GM23248 (cell line): ENCODE measurements at regions of chr7 and their contacts with region 1.

Region 1: DNA sequence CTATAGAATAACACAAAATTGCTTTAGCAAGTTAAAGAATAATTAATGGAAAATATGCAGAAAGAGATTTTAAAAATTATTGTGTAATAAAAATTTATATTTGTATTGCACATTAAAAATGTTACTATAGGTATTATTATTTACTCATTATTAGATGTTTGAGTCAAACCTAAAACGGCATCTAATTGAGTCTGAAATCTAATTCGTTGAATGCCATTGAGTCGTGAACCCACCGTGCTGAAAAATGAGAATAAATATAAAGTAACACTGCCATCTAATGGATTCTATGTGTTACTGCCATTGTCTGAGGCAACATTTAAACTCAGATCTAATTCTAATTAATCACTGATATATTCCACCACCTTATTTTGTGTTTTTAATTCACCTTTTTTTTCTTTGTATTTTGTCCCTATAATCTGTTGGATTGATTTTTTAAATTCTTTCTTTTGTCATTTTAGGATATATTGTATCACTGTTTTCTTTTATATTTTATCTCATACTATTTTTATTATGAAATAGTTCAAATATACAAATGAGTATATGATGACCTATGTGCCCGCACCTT is 62.2 kb downstream of the SAMD9 start:
- DNase-seq: peak; percentile 70
- H3K4me3 ChIP-seq: no peak overlapping the region
- H3K27ac ChIP-seq: no peak overlapping the region
- H3K4me1 ChIP-seq: no peaks in the 10 kb centered on the region
- H3K27me3 ChIP-seq: no peaks in the 10 kb centered on the region

Region 2: DNA sequence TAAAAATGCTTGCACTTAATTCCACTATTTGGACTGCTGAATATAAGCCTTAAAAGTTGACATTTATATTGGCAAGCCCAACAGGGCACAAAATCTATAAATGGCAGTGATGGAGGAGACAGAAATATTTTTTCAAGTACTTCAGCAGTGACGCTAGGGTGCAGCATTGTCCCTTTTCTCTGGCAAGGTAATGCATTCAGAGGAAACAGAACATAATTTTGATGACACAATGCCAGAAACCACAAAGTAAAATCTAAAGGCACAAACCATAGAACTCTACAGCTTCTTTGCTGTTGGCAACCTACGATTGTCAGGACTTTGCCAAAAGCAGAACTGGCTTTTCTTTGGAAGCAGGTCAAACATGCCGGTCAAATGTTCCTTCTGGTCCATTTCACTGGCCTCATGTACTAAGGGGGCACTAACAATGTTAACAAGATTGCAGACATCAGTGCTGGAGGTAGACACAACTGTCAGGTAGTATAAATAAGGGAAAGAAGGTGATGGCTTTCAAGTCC is 434.5 kb before region 1 on chr7:
- in situ Hi-C with region 1: loop called (anchors 5 kb)
- DNase-seq: peak; percentile 89
- H3K4me3 ChIP-seq: no peak overlapping the region
- H3K27ac ChIP-seq: peak overlapping the region; percentile 7; the same call in 1 of the 2 replicates
- H3K4me1 ChIP-seq: peaks cover 25% of the 10 kb centered on the region
- H3K27me3 ChIP-seq: no peaks in the 10 kb centered on the region

Region 3: GRCh38 chr7:92645114-92646061 is 410.2 kb before region 1 on chr7:
- in situ Hi-C with region 1: no loop called
- DNase-seq: no peak
- H3K4me3 ChIP-seq: no peak overlapping the region
- H3K27ac ChIP-seq: peak overlapping the region; percentile 38; the same call in 1 of the 2 replicates
- H3K4me1 ChIP-seq: peaks cover 32% of the 10 kb centered on the region
- H3K27me3 ChIP-seq: no peaks in the 10 kb centered on the region

Region 4: GRCh38 chr7:92682903-92683539 is 372.6 kb before region 1 on chr7:
- in situ Hi-C with region 1: loop called (anchors 10 kb)
- DNase-seq: no peak
- H3K4me3 ChIP-seq: no peak overlapping the region
- H3K27ac ChIP-seq: peak overlapping the region; percentile 17; the same call in 1 of the 2 replicates
- H3K4me1 ChIP-seq: no peaks in the 10 kb centered on the region
- H3K27me3 ChIP-seq: no peaks in the 10 kb centered on the region